Activated naive CD4-positive, alpha-beta T cell treated with anti-CD3 and anti-CD28 coated beads, Interleukin-2, amount 10 ng/mL, durations not matched to agents 7 days and 5 days (primary cell): ENCODE measurements at regions of chr12 and their contacts with region 1.

Region 1: GRCh38 chr12:120234643-120235368 is 30.7 kb downstream of the PXN start:
- DNase-seq: no peak
- H3K4me3 Mint-ChIP-seq: no peak overlapping the region
- H3K27ac Mint-ChIP-seq: peak overlapping the region; percentile 29
- H3K4me1 Mint-ChIP-seq: peaks cover 91% of the 10 kb centered on the region
- H3K27me3 Mint-ChIP-seq: no peaks in the 10 kb centered on the region

Region 2: GRCh38 chr12:119998471-119999245 is 236.1 kb before region 1 on chr12:
- CTCF ChIA-PET with region 1: no interaction called
- DNase-seq: no peak
- H3K4me3 Mint-ChIP-seq: no peak overlapping the region
- H3K27ac Mint-ChIP-seq: no peak overlapping the region
- H3K4me1 Mint-ChIP-seq: peaks cover 7% of the 10 kb centered on the region
- H3K27me3 Mint-ChIP-seq: no peaks in the 10 kb centered on the region

Region 3: GRCh38 chr12:120086801-120087621 is 147.8 kb before region 1 on chr12:
- CTCF ChIA-PET with region 1: no interaction called
- DNase-seq: peak; percentile 100
- H3K4me3 Mint-ChIP-seq: peak overlapping the region; percentile 63
- H3K27ac Mint-ChIP-seq: peak overlapping the region; percentile 88
- H3K4me1 Mint-ChIP-seq: peaks cover 32% of the 10 kb centered on the region
- H3K27me3 Mint-ChIP-seq: no peaks in the 10 kb centered on the region

Region 4: GRCh38 chr12:120126635-120127005 is 108.2 kb before region 1 on chr12:
- CTCF ChIA-PET with region 1: no interaction called
- DNase-seq: no peak
- H3K4me3 Mint-ChIP-seq: no peak overlapping the region
- H3K27ac Mint-ChIP-seq: peak overlapping the region; percentile 78
- H3K4me1 Mint-ChIP-seq: peaks cover 36% of the 10 kb centered on the region
- H3K27me3 Mint-ChIP-seq: no peaks in the 10 kb centered on the region

Region 5: DNA sequence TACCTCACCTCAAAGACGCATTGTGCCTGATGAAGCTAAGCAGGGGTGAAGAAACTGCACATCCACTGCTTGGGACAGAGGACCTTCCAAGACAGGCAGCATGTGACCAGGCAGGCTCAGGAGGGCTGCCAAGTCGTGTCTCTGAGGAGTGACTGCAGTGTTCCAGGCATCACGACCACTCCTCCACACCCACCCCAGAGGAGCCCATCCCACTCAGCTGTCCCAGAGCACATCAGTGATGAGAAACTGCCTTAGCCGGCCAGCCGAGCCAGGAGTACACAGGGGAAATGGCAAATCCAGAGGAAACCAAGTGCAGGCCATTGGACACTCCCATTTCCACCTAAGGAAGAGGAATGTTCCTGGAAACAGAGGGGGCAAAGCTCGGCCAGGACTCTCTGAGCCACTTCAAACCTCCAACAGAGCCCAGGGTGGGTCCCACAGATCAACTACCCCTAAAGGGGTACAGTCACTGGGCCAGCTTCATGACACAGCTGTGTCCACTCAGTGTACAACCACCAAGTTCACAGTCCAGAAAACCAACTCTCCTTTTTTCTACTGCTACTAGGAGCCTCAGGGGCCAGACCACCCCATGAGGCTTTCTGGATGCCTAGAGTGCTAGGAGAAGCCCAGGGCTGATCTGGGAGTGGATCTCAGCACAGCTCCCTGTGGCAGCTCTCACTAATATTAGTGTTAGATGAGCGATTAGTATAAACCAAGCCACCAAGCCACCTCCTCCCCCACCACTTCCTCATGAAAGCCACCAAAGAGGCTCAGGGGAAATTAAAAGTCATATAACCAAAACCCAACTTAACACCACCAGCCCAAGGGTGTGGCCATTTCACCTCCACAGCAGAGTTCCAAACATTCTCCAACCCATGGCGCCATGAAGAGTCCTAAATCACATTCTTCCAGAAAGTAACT is 15.3 kb after region 1 on chr12:
- CTCF ChIA-PET with region 1: interaction called, 773 read pairs
- DNase-seq: peak; percentile 66
- H3K4me3 Mint-ChIP-seq: peak overlapping the region; percentile 54
- H3K27ac Mint-ChIP-seq: peak overlapping the region; percentile 92
- H3K4me1 Mint-ChIP-seq: peaks cover 82% of the 10 kb centered on the region
- H3K27me3 Mint-ChIP-seq: no peaks in the 10 kb centered on the region

Region 6: DNA sequence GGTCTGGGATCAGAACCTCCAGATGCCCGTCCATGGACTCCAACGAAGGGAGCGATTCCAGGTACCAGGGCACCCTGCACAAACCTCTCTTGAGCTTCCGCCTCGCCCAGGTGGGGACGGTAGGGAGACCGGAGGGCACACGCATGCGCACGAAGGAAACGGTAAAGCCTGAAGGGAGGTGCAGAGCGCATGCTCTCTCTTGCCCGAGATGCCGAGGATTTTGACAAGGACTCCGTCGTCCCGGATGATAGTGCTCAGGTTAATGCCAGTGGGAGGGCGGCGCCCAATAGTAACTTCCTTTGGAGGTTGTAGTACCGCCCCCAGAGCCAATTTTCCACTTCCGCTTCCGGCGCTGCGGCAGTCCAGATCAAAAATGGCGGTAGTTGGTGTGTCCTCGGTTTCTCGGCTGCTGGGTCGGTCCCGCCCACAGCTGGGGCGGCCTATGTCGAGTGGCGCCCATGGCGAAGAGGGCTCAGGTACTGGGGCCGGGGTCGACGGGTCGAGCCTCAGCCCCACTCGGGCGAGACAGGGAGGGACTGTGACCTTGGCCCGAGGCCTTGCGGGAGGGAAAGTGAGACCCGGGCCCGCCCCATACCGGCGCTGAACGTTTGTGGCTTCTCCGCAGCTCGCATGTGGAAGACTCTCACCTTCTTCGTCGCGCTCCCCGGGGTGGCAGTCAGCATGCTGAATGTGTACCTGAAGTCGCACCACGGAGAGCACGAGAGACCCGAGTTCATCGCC is 203.1 kb after region 1 on chr12 and contains the start of gene COX6A1:
- CTCF ChIA-PET with region 1: no interaction called
- DNase-seq: peak; percentile 99
- H3K4me3 Mint-ChIP-seq: peak within 1 kb of the TSS; percentile 84
- H3K27ac Mint-ChIP-seq: peak within 1 kb of the TSS; percentile 92
- H3K4me1 Mint-ChIP-seq: peaks cover 34% of the 10 kb centered on the region
- H3K27me3 Mint-ChIP-seq: peaks cover 5% of the 10 kb centered on the region